Caco-2 (cell line): ENCODE measurements at regions of chr14 and their contacts with region 1.

Region 1: GRCh38 chr14:56491299-56492285 is 88.0 kb upstream of the TMEM260 start:
- DNase-seq: peak; percentile 70 to 71
- H3K4me3 ChIP-seq: no peak overlapping the region
- H3K4me3 Mint-ChIP-seq: no peak overlapping the region
- H3K27ac Mint-ChIP-seq: no peak overlapping the region
- H3K4me1 ChIP-seq: no peaks in the 10 kb centered on the region
- H3K4me1 Mint-ChIP-seq: no peaks in the 10 kb centered on the region
- H3K27me3 ChIP-seq: no peaks in the 10 kb centered on the region
- H3K27me3 Mint-ChIP-seq: peaks cover 9% of the 10 kb centered on the region
- CTCF ChIP-seq: peak; percentile 71 to 78

Region 2: DNA sequence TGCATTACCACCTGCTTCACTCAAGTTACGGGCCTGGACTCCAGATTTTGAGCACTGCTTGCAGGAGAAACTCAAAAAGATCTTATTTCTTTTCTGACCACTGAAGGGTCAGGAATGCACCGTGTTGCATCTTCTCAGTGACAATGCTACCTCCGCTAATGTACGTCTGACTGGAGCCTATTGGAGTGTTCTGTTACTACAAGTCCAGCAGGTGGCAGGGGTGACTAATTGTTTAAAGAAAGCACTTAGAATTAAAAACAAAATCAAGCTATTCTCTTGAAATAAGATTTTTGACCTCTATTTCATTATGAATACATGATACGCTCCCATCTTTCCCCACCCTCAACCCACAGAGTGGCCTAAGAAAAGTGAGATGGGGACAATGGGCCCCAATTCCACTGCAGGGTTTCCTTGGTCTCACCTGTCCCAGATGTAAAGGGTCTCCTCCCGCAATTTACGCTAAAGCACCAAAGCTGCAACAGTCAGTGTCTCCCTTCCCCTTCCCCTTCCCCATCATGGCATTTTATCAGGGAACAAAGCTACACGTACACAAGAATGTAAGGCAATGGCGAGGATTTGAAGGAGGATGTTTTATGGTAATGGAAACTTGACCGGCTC is 1053.4 kb before region 1 on chr14:
- CTCF ChIA-PET with region 1: no interaction called
- POLR2A ChIA-PET with region 1: no interaction called
- intact Hi-C with region 1: loop called (anchors 5 kb)
- DNase-seq: peak in 1 of 2 experiments; percentile 49
- H3K4me3 ChIP-seq: no peak overlapping the region
- H3K4me3 Mint-ChIP-seq: no peak overlapping the region
- H3K27ac Mint-ChIP-seq: no peak overlapping the region
- H3K4me1 ChIP-seq: no peaks in the 10 kb centered on the region
- H3K4me1 Mint-ChIP-seq: no peaks in the 10 kb centered on the region
- H3K27me3 ChIP-seq: no peaks in the 10 kb centered on the region
- H3K27me3 Mint-ChIP-seq: peaks cover 3% of the 10 kb centered on the region
- CTCF ChIP-seq: peak; percentile 69 to 70

Region 3: GRCh38 chr14:56514663-56515371 is 23.2 kb after region 1 on chr14:
- CTCF ChIA-PET with region 1: no interaction called
- POLR2A ChIA-PET with region 1: no interaction called
- intact Hi-C with region 1: no loop called
- DNase-seq: no peak
- H3K4me3 ChIP-seq: no peak overlapping the region
- H3K4me3 Mint-ChIP-seq: no peak overlapping the region
- H3K27ac Mint-ChIP-seq: no peak overlapping the region
- H3K4me1 ChIP-seq: no peaks in the 10 kb centered on the region
- H3K4me1 Mint-ChIP-seq: no peaks in the 10 kb centered on the region
- H3K27me3 ChIP-seq: no peaks in the 10 kb centered on the region
- H3K27me3 Mint-ChIP-seq: no peaks in the 10 kb centered on the region
- CTCF ChIP-seq: no peak

Region 4: DNA sequence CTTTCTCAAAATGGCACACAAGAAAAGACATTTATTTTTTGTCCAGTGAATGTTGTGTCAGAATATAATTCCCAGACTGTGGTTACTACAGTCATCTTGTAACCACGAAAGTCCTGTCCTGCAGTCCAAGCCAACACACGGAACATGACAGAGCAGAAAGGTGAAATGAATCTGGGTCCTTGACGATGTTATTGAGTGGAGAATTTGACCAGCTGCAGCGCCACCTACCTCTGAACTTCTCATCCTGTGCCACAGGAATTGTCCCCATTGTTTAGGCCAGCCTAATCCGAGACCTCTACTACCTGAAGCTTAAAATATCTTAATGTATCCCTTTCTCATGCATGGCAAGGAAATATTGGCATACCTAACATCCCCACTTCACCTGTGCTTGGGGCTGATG is 382.8 kb after region 1 on chr14:
- CTCF ChIA-PET with region 1: no interaction called
- POLR2A ChIA-PET with region 1: no interaction called
- intact Hi-C with region 1: loop called (anchors 1 kb)
- DNase-seq: peak; percentile 49 to 52
- H3K4me3 ChIP-seq: no peak overlapping the region
- H3K4me3 Mint-ChIP-seq: no peak overlapping the region
- H3K27ac Mint-ChIP-seq: no peak overlapping the region
- H3K4me1 ChIP-seq: no peaks in the 10 kb centered on the region
- H3K4me1 Mint-ChIP-seq: no peaks in the 10 kb centered on the region
- H3K27me3 ChIP-seq: no peaks in the 10 kb centered on the region
- H3K27me3 Mint-ChIP-seq: peaks cover 4% of the 10 kb centered on the region
- CTCF ChIP-seq: peak; percentile 55 to 57

Region 5: GRCh38 chr14:57189070-57189469 is 697.5 kb after region 1 on chr14:
- CTCF ChIA-PET with region 1: interaction called, 4 read pairs
- POLR2A ChIA-PET with region 1: no interaction called
- intact Hi-C with region 1: loop called (anchors 1 kb)
- DNase-seq: peak in 1 of 2 experiments; percentile 4
- H3K4me3 ChIP-seq: no peak overlapping the region
- H3K4me3 Mint-ChIP-seq: no peak overlapping the region
- H3K27ac Mint-ChIP-seq: no peak overlapping the region
- H3K4me1 ChIP-seq: no peaks in the 10 kb centered on the region
- H3K4me1 Mint-ChIP-seq: no peaks in the 10 kb centered on the region
- H3K27me3 ChIP-seq: 0 out of 2 replicates have a peak, but pooled peaks cover 2% of the 10 kb centered on the region
- H3K27me3 Mint-ChIP-seq: peaks cover 9% of the 10 kb centered on the region
- CTCF ChIP-seq: peak in 1 of 2 experiments; percentile 24

Region 6: DNA sequence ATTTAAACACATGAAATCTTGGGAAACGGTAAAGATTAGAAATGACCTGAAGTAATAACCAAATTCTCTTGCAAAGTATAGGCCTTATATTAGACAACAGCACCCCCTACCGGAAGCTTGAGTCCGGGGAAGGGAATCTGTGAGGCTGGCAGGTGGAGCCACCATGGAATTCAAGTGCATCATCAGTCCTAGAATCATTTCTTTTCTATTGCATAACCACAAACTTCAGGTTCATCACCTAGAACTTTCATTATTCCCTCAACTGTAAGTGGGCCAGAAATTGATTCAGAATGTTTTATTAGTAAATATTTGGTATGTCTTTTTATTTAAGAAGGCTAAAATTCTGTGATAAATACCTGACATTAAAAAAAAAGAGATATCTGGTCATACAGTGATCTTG is 825.7 kb after region 1 on chr14:
- CTCF ChIA-PET with region 1: interaction called, 3 read pairs
- POLR2A ChIA-PET with region 1: no interaction called
- intact Hi-C with region 1: loop called (anchors 1 kb)
- DNase-seq: peak; percentile 74 to 88
- H3K4me3 ChIP-seq: no peak overlapping the region
- H3K4me3 Mint-ChIP-seq: no peak overlapping the region
- H3K27ac Mint-ChIP-seq: no peak overlapping the region
- H3K4me1 ChIP-seq: no peaks in the 10 kb centered on the region
- H3K4me1 Mint-ChIP-seq: no peaks in the 10 kb centered on the region
- H3K27me3 ChIP-seq: no peaks in the 10 kb centered on the region
- H3K27me3 Mint-ChIP-seq: peaks cover 3% of the 10 kb centered on the region
- CTCF ChIP-seq: peak; percentile 69 to 86